PC-3 (cell line): ENCODE measurements at regions of chr14 and their contacts with region 1.

Region 1: GRCh38 chr14:96832351-96832750 is 35.2 kb downstream of the VRK1 start:
- DNase-seq: no peak
- ATAC-seq: no peak
- H3K4me3 ChIP-seq: no peak overlapping the region
- H3K27ac ChIP-seq: no peak overlapping the region
- H3K4me1 ChIP-seq: peaks cover 13% of the 10 kb centered on the region; the same call in 1 of the 2 replicates
- H3K27me3 ChIP-seq: no peaks in the 10 kb centered on the region
- CTCF ChIP-seq: no peak

Region 2: DNA sequence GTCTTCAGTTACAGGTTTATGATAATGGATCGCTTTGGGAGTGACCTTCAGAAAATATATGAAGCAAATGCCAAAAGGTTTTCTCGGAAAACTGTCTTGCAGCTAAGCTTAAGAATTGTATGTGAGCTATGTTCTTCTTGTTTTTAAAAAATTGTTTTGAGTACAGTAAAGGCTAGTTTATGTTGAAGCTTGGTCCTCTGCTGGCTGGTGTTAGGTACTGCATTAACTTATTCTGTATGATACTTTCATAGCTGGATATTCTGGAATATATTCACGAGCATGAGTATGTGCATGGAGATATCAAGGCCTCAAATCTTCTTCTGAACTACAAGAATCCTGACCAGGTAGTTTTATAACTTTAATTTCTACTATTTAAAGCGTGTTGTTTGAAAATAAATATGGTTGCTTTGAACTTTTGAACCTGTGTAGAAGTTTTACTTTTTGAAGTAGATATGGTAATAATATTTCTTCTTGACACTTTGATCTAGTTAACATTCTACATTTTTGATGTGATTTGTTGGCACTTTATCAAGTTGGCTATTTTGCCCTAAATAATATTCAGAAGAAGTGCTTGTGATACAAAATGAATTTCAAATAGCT is 20.6 kb after region 1 on chr14:
- CTCF ChIA-PET with region 1: interaction called, 3 read pairs
- POLR2A ChIA-PET with region 1: no interaction called
- intact Hi-C with region 1: loop called (anchors 2 kb)
- DNase-seq: peak; percentile 52
- ATAC-seq: peak; percentile 70
- H3K4me3 ChIP-seq: no peak overlapping the region
- H3K27ac ChIP-seq: no peak overlapping the region
- H3K4me1 ChIP-seq: peaks cover 13% of the 10 kb centered on the region
- H3K27me3 ChIP-seq: no peaks in the 10 kb centered on the region
- CTCF ChIP-seq: peak; percentile 80

Region 3: GRCh38 chr14:97276573-97276972 is 444.2 kb after region 1 on chr14:
- CTCF ChIA-PET with region 1: no interaction called
- POLR2A ChIA-PET with region 1: no interaction called
- intact Hi-C with region 1: loop called (anchors 10 kb)
- DNase-seq: peak; percentile 71
- ATAC-seq: peak; percentile 48; the same call in 1 of the 2 replicates
- H3K4me3 ChIP-seq: no peak overlapping the region
- H3K27ac ChIP-seq: peak overlapping the region; percentile 52
- H3K4me1 ChIP-seq: peaks cover 47% of the 10 kb centered on the region
- H3K27me3 ChIP-seq: no peaks in the 10 kb centered on the region
- CTCF ChIP-seq: no peak